Astrocyte of the cerebellum (primary cell): ENCODE measurements at regions of chr10 and their contacts with region 1.

Region 1: GRCh38 chr10:6729071-6729774 is 149.1 kb upstream of the PRKCQ start:
- DNase-seq: no peak
- H3K4me3 ChIP-seq: no peak overlapping the region
- CTCF ChIP-seq: no peak

Region 2: DNA sequence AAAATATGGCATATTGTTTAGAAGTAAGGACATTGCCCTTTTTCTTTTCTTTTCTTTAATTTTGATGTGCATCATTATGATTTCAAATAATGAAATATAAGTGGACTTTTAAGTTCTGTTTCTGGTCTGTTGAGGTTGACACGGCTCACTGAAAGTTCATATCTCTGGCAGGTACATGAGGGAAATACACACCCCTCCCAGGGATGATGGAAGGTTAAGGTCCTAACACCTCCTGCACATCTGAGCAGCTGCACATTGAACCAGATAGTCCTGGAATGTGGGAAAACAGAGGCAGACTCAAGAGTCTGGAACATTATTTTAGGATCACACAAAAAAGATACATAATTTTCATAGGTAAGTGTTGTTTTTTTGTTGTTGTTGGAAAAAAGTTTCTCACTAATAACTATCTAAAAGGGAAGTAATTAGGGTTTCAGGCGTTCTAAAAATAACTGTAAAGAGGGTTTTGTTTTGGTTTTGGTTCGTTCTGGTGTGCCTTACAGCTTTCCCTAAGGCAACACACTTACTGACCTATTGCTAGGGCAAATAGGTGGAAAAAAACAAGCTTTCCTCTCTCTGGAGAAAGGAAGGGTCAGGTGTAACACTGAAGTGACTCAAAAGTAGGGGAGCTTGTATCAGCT is 52.0 kb after region 1 on chr10:
- in situ Hi-C with region 1: loop called (anchors 5 kb)
- DNase-seq: no peak
- H3K4me3 ChIP-seq: no peak overlapping the region
- CTCF ChIP-seq: no peak